Activated CD8-positive, alpha-beta T cell treated with anti-CD3 and anti-CD28 coated beads for 36 hours (primary cell): ENCODE measurements at regions of chr20 and their contacts with region 1.

Region 1: GRCh38 chr20:51639206-51639832 is 96.8 kb upstream of the NFATC2 start:
- DNase-seq: peak; percentile 85
- ATAC-seq: peak; percentile 90
- H3K4me3 Mint-ChIP-seq: no peak overlapping the region
- H3K27ac Mint-ChIP-seq: no peak overlapping the region
- H3K4me1 Mint-ChIP-seq: no peaks in the 10 kb centered on the region
- H3K27me3 Mint-ChIP-seq: no peaks in the 10 kb centered on the region
- CTCF ChIP-seq: peak; percentile 87

Region 2: DNA sequence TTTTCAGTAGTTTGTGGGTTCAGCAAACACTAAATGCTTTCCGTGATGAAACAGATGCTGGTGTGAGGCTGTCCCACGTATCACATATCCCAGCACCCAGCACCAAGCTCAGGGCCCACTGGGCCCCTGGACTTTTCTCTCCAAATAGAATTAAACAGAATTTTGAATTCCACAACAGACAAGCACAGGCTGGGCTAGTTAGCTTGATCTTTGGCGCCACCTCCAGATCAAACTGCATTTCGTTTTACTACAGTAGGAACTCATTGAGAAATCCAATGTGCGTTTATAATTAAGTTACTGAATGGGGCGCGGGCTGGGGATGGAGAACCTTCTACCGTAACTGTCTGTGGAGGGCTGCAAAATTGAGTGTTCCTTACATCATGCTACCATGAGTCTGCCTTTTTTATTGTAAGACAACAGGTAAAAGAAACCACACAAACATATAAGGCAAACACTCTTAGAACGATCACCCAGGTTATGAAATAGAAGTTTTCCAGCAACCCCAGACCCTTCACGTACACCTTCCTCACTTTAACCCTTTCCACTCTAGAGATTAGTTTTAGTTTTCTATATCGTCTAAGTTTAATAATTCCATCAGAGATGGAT is 444.4 kb after region 1 on chr20:
- CTCF ChIA-PET with region 1: interaction called, 5 read pairs
- POLR2A ChIA-PET with region 1: no interaction called
- intact Hi-C with region 1: loop called (anchors 10 kb)
- DNase-seq: peak; percentile 77
- ATAC-seq: no peak
- H3K4me3 Mint-ChIP-seq: no peak overlapping the region
- H3K27ac Mint-ChIP-seq: no peak overlapping the region
- H3K4me1 Mint-ChIP-seq: peaks cover 12% of the 10 kb centered on the region
- H3K27me3 Mint-ChIP-seq: no peaks in the 10 kb centered on the region
- CTCF ChIP-seq: peak; percentile 77